Mammary epithelial cell (primary cell): ENCODE measurements at regions of chr20 and their contacts with region 1.

Region 1: DNA sequence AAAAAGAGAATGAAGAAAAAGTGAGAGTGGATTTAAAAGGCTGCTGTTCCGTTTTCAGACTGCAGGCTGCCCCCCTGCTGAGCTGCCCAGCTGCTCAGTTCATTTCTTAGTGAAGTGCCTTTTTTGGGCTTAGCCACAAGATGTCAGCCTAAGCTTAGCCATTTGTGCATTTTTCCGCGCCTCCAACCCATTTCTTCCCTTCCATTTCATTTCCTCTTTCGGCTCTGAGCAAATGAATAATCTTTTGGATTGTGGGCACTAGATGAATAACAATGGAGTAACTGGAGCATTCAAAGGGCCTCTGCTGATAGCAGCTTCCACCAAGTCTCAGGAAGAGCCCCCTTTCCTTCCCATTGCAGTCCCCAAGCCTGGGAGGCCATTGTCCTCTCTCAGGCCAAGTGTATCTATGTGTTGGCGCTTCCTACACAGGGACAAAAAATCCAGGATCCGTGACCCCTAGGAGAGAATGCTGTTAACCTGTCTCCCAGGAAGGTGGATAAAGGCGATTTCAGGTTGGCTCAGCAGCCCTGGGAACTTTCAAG is 83.5 kb upstream of the SPTLC3 start:
- DNase-seq: peak; percentile 73
- H3K4me3 ChIP-seq: no peak overlapping the region
- H3K27ac ChIP-seq: no peak overlapping the region
- H3K4me1 ChIP-seq: peaks cover 31% of the 10 kb centered on the region
- H3K27me3 ChIP-seq: no peaks in the 10 kb centered on the region
- CTCF ChIP-seq: peak; percentile 86 to 98

Region 2: GRCh38 chr20:12394786-12395185 is 530.5 kb before region 1 on chr20:
- CTCF ChIA-PET with region 1: no interaction called
- dilution Hi-C with region 1: no loop called
- in situ Hi-C with region 1: no loop called
- intact Hi-C with region 1: loop called (anchors 2 kb)
- DNase-seq: peak; percentile 59
- H3K4me3 ChIP-seq: no peak overlapping the region
- H3K27ac ChIP-seq: no peak overlapping the region
- H3K4me1 ChIP-seq: no peaks in the 10 kb centered on the region
- H3K27me3 ChIP-seq: no peaks in the 10 kb centered on the region
- CTCF ChIP-seq: peak; percentile 9 to 47

Region 3: GRCh38 chr20:13105864-13106457 is 180.7 kb after region 1 on chr20:
- CTCF ChIA-PET with region 1: no interaction called
- dilution Hi-C with region 1: no loop called
- in situ Hi-C with region 1: loop called in 1 of 2 experiments (anchors 5 kb)
- intact Hi-C with region 1: loop called (anchors 1 kb)
- DNase-seq: peak; percentile 12
- H3K4me3 ChIP-seq: no peak overlapping the region
- H3K27ac ChIP-seq: no peak overlapping the region
- H3K4me1 ChIP-seq: peaks cover 3% of the 10 kb centered on the region
- H3K27me3 ChIP-seq: no peaks in the 10 kb centered on the region
- CTCF ChIP-seq: peak; percentile 62 to 65

Region 4: DNA sequence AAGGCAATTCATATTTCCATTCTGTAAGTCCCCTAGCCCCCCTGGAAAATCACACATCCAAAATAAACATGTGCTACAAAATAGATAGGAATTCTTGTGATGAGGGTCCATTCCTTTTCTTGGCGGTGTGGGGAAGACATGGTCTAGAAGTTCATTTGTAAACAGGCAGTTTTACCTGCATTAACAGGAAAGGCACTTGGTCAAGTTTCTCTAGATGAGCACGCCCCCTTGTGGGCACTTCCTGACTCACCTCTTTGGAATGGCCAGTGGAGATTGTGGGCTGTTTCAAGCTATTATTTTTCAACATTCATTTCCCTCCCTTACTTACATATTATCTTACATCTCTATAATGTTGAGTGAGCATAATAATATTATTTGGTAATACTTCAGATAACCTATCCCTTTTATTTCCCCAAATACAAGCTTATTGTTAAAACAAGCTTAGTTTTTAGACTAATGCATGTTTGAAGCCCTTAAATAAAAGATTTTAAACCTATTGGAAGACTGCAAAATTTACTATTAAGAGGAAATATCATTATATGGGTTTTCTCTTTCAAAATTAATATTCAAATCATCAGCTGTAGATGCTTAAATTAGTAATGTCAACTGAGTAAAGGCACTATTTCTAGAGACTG is 621.3 kb after region 1 on chr20:
- CTCF ChIA-PET with region 1: no interaction called
- dilution Hi-C with region 1: no loop called
- in situ Hi-C with region 1: no loop called
- intact Hi-C with region 1: loop called (anchors 5 kb)
- DNase-seq: peak; percentile 54
- H3K4me3 ChIP-seq: no peak overlapping the region
- H3K27ac ChIP-seq: no peak overlapping the region
- H3K4me1 ChIP-seq: no peaks in the 10 kb centered on the region
- H3K27me3 ChIP-seq: no peaks in the 10 kb centered on the region
- CTCF ChIP-seq: peak; percentile 69 to 76

Region 5: GRCh38 chr20:13784893-13785715 is 859.8 kb after region 1 on chr20 and contains the starts of genes ESF1 and NDUFAF5:
- CTCF ChIA-PET with region 1: interaction called, 3 read pairs
- dilution Hi-C with region 1: no loop called
- in situ Hi-C with region 1: no loop called
- intact Hi-C with region 1: loop called (anchors 5 kb)
- DNase-seq: peak; percentile 97
- H3K4me3 ChIP-seq: peak within 1 kb of the TSS; percentile 86 to 95 (median 87)
- H3K27ac ChIP-seq: peak within 1 kb of the TSS; percentile 74
- H3K4me1 ChIP-seq: peaks cover 18% of the 10 kb centered on the region
- H3K27me3 ChIP-seq: no peaks in the 10 kb centered on the region
- CTCF ChIP-seq: no peak
- total RNA-seq, gene ESF1: 6.7 to 16.2 TPM
- total RNA-seq, gene NDUFAF5: 10.8 to 34.7 TPM